Colonic mucosa (tissue), 4 donors: ENCODE measurements at regions of chr16 and their contacts with region 1.

Region 1: DNA sequence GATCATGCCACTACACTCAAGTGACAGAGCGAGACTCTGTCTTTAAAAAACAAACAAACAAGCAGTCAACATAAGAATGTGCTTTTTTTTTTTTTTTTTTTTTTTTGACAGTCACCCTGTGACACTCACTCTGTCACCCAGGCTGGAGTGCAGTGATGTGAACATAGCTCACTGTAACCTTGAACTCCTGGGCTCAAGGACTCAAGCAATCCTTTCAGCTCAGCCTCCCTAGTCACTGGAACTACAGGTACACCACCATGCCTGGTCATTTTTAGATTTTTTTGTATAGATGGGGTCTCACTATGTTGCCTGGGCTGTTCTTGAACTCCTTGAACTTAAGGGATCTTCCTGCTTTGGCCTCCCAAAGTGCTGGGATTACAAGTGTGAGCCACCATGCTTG is 15.3 kb upstream of the CHP2 start:
- DNase-seq: no peak
- H3K4me3 ChIP-seq: no peak overlapping the region
- H3K27ac ChIP-seq: no peak overlapping the region
- H3K4me1 ChIP-seq: no peaks in the 10 kb centered on the region
- H3K27me3 ChIP-seq: no peaks in the 10 kb centered on the region
- CTCF ChIP-seq: no peak

Region 2: GRCh38 chr16:23803591-23804123 is 64.1 kb after region 1 on chr16:
- intact Hi-C with region 1: loop called (anchors 5 kb)
- DNase-seq: peak; percentile 73
- H3K4me3 ChIP-seq: no peak overlapping the region
- H3K27ac ChIP-seq: no peak overlapping the region
- H3K4me1 ChIP-seq: no peaks in the 10 kb centered on the region
- H3K27me3 ChIP-seq: no peaks in the 10 kb centered on the region
- CTCF ChIP-seq: peak; percentile 47

Region 3: DNA sequence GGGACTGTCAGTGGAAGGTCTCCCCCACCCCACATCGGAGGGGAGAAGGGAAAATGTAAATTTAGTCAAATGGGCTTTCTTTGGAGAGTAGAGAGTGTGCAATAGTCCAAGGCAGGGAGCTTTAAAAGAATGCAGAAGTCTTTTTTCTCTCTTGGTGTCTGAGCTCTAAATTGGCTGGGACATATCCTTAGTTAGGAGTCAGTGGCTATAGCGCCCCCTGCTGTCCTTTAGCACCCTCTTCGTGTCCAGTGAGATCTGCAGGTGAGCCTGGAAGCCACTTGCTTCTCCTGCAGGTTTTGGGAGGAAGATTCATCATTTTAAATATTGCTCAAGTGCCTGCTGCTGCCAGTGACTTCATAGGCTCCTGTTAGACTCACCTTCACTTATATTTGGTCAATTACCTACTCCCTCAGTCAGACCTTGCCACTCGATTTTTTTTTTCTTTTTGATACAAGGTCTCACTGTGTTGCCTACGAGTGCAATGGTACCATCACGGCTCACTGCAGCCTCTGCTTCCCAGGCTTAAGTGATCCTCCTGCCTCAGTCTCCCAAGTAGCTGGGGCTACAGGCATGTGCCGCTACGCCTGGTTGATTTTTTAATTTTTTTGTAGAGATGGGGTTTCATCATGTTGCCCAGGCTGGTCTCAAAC is 271.0 kb after region 1 on chr16:
- intact Hi-C with region 1: loop called (anchors 5 kb)
- DNase-seq: peak; percentile 83
- H3K4me3 ChIP-seq: no peak overlapping the region
- H3K27ac ChIP-seq: no peak overlapping the region
- H3K4me1 ChIP-seq: peaks cover 9% of the 10 kb centered on the region
- H3K27me3 ChIP-seq: no peaks in the 10 kb centered on the region
- CTCF ChIP-seq: peak; percentile 80

Region 4: GRCh38 chr16:24036614-24037013 is 297.1 kb after region 1 on chr16:
- intact Hi-C with region 1: loop called (anchors 5 kb)
- DNase-seq: peak; percentile 48
- H3K4me3 ChIP-seq: no peak overlapping the region
- H3K27ac ChIP-seq: no peak overlapping the region
- H3K4me1 ChIP-seq: no peaks in the 10 kb centered on the region
- H3K27me3 ChIP-seq: no peaks in the 10 kb centered on the region
- CTCF ChIP-seq: peak; percentile 64